ENCODE measurements at regions of chr2 and their contacts with region 1.

Region 1: GRCh38 chr2:71798266-71799012 is 345.1 kb downstream of the DYSF start:
- DNase-seq: peak; percentile 34
- ATAC-seq: peak; percentile 86
- H3K4me3 ChIP-seq: no peak overlapping the region
- H3K27ac ChIP-seq: no peak overlapping the region
- H3K4me1 ChIP-seq: peaks cover 0 to 8% of the 10 kb centered on the region in 2 experiments; a peak in 1 of 4 replicates
- H3K27me3 ChIP-seq: no peaks in the 10 kb centered on the region
- CTCF ChIP-seq: peak; percentile 92 to 98 (median 92)
- POLR2A ChIP-seq: no peak
- RAD21 ChIP-seq: peak; percentile 84

Region 2: GRCh38 chr2:71545572-71546274 is 252.7 kb before region 1 on chr2:
- CTCF ChIA-PET with region 1: interaction called, 13 read pairs
- POLR2A ChIA-PET with region 1: no interaction called
- RAD21 ChIA-PET with region 1: no interaction called
- intact Hi-C with region 1: loop called (anchors 1 kb)
- DNase-seq: peak; percentile 57
- ATAC-seq: peak; percentile 89
- H3K4me3 ChIP-seq: peak overlapping the region; percentile 37 to 53
- H3K27ac ChIP-seq: peak overlapping the region; percentile 4; the same call in 1 of the 2 replicates
- H3K4me1 ChIP-seq: peaks cover 2 to 15% of the 10 kb centered on the region in 2 experiments; a peak in 3 of 4 replicates
- H3K27me3 ChIP-seq: no peaks in the 10 kb centered on the region
- CTCF ChIP-seq: peak; percentile 72 to 87 (median 84)
- POLR2A ChIP-seq: no peak
- RAD21 ChIP-seq: peak; percentile 92

Region 3: DNA sequence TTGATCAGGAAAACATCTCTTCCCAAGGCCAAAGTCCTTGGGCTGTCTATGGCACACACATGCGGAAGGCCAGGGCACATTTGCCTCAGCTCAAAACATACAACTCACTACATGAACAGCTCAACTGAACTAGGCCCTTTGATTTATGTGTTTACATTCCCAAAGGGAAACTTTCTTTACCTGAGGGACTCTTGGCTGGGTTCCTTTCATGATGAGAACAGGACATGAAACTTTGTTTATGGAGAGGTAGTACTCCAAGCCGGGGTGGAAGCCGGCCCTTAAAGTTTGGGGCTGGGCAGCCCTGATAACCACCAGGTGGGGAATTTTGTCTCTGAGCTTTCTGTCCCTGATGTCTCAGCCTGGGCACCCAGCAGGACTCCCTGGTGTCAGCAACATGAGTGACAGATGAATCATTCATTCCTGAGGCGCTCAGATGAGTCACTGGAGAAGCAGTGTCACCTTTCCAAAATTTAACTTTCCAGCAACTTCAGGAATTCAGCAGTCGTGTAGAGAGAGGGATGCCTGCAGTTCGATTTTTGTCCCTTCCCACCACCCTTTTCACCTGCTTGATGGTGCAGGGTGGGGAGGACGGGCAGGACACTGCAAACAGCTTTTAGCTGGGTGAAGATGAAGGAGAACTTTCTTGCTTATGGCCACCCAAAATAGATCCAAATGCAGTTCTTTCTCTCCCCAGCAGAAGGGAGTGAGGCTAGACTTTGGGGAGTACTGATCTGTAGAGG is 13.5 kb before region 1 on chr2:
- CTCF ChIA-PET with region 1: interaction called, 14 read pairs
- POLR2A ChIA-PET with region 1: no interaction called
- RAD21 ChIA-PET with region 1: no interaction called
- intact Hi-C with region 1: no loop called
- DNase-seq: peak; percentile 75
- ATAC-seq: peak; percentile 94
- H3K4me3 ChIP-seq: peak overlapping the region in 1 of 2 experiments; percentile 16; a peak in 2 of 4 replicates
- H3K27ac ChIP-seq: peak overlapping the region; percentile 33; the same call in 1 of the 2 replicates
- H3K4me1 ChIP-seq: peaks cover 12 to 33% of the 10 kb centered on the region in 2 experiments
- H3K27me3 ChIP-seq: no peaks in the 10 kb centered on the region
- CTCF ChIP-seq: peak in 2 of 3 experiments; percentile 8 to 28; a peak in 1 of 6 replicates
- POLR2A ChIP-seq: no peak
- RAD21 ChIP-seq: peak; percentile 38

Region 4: DNA sequence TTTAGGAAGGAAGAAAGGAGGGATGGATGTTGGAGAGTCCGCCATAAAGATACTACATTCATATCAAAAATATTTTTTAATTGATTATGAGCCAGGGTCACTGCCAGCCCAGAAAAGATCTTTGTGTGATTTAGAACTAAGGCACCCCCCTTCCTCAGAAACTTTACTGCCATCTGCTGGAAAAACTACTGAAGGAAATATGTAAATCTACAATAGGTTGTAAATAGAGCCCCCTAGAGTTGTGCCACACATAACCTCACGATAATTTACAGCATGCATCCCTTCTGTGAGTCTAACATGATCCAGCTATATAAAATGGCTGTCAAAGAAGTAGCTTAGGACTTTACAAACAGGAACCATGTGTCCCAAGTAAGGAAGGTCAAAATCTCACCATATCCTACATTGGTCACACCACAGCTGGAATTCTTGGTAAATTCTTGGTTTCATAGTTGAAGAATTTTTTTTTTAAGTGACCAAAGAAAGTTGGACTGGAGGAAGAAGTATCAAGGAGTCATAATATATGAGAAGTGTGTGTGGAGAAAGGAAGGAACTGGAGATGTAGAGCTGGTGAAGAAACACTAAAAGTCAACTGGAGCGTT is 196.7 kb after region 1 on chr2:
- CTCF ChIA-PET with region 1: no interaction called
- POLR2A ChIA-PET with region 1: no interaction called
- RAD21 ChIA-PET with region 1: no interaction called
- intact Hi-C with region 1: loop called (anchors 1 kb)
- DNase-seq: peak; percentile 27
- ATAC-seq: peak; percentile 88
- H3K4me3 ChIP-seq: no peak overlapping the region
- H3K27ac ChIP-seq: no peak overlapping the region
- H3K4me1 ChIP-seq: no peaks in the 10 kb centered on the region
- H3K27me3 ChIP-seq: no peaks in the 10 kb centered on the region
- CTCF ChIP-seq: peak; percentile 49 to 99 (median 67)
- POLR2A ChIP-seq: no peak
- RAD21 ChIP-seq: peak; percentile 83

Region 5: GRCh38 chr2:72035518-72036172 is 237.2 kb after region 1 on chr2:
- CTCF ChIA-PET with region 1: no interaction called
- POLR2A ChIA-PET with region 1: no interaction called
- RAD21 ChIA-PET with region 1: no interaction called
- intact Hi-C with region 1: no loop called
- DNase-seq: no peak
- ATAC-seq: peak; percentile 27; the same call in 1 of the 2 replicates
- H3K4me3 ChIP-seq: no peak overlapping the region
- H3K27ac ChIP-seq: no peak overlapping the region
- H3K4me1 ChIP-seq: peaks cover 0 to 17% of the 10 kb centered on the region in 2 experiments; a peak in 2 of 4 replicates
- H3K27me3 ChIP-seq: no peaks in the 10 kb centered on the region
- CTCF ChIP-seq: no peak
- POLR2A ChIP-seq: no peak
- RAD21 ChIP-seq: no peak

Region 6: DNA sequence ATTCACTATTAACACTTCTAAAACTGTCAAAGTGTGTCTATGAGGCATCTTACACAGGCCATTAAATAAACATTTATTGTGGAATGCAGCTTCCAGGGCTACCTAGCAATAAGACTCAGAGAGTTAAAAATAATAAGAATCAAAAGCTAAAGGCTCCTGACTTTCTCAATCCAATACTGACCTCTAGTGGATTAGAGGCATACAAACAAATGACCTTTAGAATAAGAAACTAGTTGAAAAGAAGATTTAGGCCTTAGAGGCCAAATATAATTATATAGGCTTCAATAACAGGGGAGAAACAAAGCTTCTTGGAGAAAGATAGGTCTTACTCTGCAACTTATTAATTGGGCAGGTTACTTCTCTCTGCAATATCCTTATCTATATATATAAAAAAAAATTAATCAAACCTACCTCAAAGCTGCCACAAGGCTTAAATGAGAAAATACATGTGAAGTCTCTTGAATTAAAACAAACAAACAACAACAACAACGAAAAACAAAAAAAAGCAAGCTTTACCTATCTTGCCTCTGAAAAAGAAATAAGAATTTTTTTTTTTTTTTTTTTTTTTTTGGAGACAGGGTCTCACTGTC is 781.2 kb after region 1 on chr2:
- CTCF ChIA-PET with region 1: interaction called, 3 read pairs
- POLR2A ChIA-PET with region 1: no interaction called
- RAD21 ChIA-PET with region 1: no interaction called
- intact Hi-C with region 1: loop called (anchors 1 kb)
- DNase-seq: peak; percentile 26
- ATAC-seq: peak; percentile 50; the same call in 1 of the 2 replicates
- H3K4me3 ChIP-seq: no peak overlapping the region
- H3K27ac ChIP-seq: no peak overlapping the region
- H3K4me1 ChIP-seq: no peaks in the 10 kb centered on the region
- H3K27me3 ChIP-seq: no peaks in the 10 kb centered on the region
- CTCF ChIP-seq: peak; percentile 54 to 76 (median 74); a peak in 5 of 6 replicates
- POLR2A ChIP-seq: no peak
- RAD21 ChIP-seq: peak; percentile 87